Sigmoid colon (tissue), 7 donors: ENCODE measurements at regions of chr3 and their contacts with region 1.

Region 1: GRCh38 chr3:47475570-47476329 is at the start of gene SCAP:
- DNase-seq: peak; percentile 97
- H3K4me3 ChIP-seq: peak within 1 kb of the TSS; percentile 75 to 97 (median 89)
- H3K27ac ChIP-seq: peak within 1 kb of the TSS; percentile 81 to 87 (median 84)
- H3K4me1 ChIP-seq: peaks cover 0 to 25% (median 20%) of the 10 kb centered on the region in 4 donors
- H3K27me3 ChIP-seq: no peaks in the 10 kb centered on the region
- CTCF ChIP-seq: peak; percentile 91 to 95 (median 93)
- EP300 ChIP-seq: no peak
- POLR2A ChIP-seq: no peak
- total RNA-seq, gene SCAP: 49.2 to 63.9 (median 56.9) TPM

Region 2: GRCh38 chr3:47420511-47421484 is 55.0 kb before region 1 on chr3:
- intact Hi-C with region 1: loop called (anchors 1 kb)
- DNase-seq: peak; percentile 91
- H3K4me3 ChIP-seq: no peak overlapping the region
- H3K27ac ChIP-seq: peak overlapping the region; percentile 55 to 76 (median 69)
- H3K4me1 ChIP-seq: peaks cover 0 to 18% (median 12%) of the 10 kb centered on the region in 4 donors
- H3K27me3 ChIP-seq: no peaks in the 10 kb centered on the region
- CTCF ChIP-seq: peak; percentile 86 to 96 (median 90)
- EP300 ChIP-seq: no peak
- POLR2A ChIP-seq: no peak

Region 3: GRCh38 chr3:47443611-47443995 is 32.1 kb before region 1 on chr3:
- intact Hi-C with region 1: loop called (anchors 2 kb)
- DNase-seq: no peak
- H3K4me3 ChIP-seq: no peak overlapping the region
- H3K27ac ChIP-seq: peak overlapping the region; percentile 67 to 78 (median 74)
- H3K4me1 ChIP-seq: peaks cover 0 to 27% (median 21%) of the 10 kb centered on the region in 4 donors
- H3K27me3 ChIP-seq: no peaks in the 10 kb centered on the region
- CTCF ChIP-seq: no peak
- EP300 ChIP-seq: no peak
- POLR2A ChIP-seq: no peak

Region 4: DNA sequence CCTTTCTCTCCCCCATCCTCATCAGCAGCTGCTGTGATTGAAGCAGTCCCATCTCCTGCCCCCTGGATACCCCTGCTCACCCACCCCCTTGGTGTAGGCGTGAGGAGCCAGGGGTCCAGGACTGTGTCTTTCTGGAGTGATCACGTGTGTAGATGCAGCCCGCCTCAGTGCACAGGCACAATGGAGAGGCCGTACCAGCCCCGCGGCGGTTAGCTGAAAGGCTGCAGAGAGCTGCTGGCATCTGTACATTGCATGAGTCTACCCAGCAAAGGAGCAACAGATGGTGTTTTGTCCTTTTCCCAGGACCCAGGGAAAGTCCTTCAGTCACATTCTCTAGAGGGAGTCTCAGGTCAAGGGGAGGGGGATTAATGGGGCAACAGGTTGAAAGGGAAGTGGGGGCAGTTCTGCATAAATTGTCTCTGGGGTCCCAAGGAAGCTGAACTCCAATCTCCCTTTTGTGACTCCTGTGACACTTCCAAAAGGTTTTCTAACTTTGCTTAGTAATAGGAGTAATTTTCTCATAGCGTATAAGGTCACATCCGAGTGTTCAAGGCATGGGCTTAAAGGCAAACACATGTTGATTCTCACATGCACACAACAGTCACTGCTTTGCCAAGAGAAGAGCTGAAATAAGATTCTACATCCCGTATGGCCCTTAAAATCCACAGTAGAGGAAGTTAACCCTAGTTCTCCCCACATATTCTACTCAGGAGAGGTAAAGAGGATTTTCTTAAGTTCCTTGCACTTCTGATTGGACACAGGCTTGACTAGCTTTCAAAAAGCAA is 95.8 kb after region 1 on chr3:
- intact Hi-C with region 1: no loop called
- DNase-seq: no peak
- H3K4me3 ChIP-seq: no peak overlapping the region
- H3K27ac ChIP-seq: no peak overlapping the region
- H3K4me1 ChIP-seq: no peaks in the 10 kb centered on the region
- H3K27me3 ChIP-seq: peaks cover 0 to under 1% (median 0%) of the 10 kb centered on the region in 3 donors
- CTCF ChIP-seq: no peak
- EP300 ChIP-seq: no peak
- POLR2A ChIP-seq: no peak